ENCODE measurements at regions of chr10 and their contacts with region 1.

Region 1: DNA sequence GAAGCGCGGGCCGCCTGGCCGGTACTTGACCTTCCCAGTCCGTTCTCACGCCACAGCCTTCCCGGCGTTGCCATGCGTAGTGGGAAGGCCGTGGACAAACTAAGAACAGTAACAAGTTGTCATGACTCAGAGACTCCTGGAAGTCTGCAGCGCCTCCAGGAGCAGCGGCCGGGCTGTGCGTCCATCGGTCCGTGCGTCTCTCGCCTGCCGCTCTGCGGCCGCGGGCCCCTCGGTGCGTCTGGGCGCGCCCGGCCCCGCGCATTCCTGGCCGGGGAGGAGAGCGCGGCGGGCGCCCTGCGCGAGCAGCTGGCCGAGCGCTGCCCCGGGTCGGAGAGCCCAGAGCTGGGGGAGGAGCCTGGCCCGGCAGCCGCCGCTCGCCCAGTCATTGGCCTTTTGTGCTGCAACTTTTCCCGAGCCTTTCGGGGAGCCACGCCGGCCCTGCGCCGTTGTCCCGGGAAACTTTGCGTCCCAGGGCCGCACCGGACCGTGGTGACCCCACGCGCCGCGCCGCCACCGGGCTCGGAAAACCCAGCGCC is 123.7 kb downstream of the TACC2 start:
- DNase-seq: peak; percentile 46 to 96
- H3K4me3 ChIP-seq: peak overlapping the region; percentile 74 to 81
- H3K27ac ChIP-seq: peak overlapping the region; percentile 97 to 99
- H3K4me1 ChIP-seq: peaks cover 0 to 19% of the 10 kb centered on the region in 2 donors
- H3K27me3 ChIP-seq: no peaks in the 10 kb centered on the region
- CTCF ChIP-seq: peak; percentile 41 to 71 (median 44)

Region 2: GRCh38 chr10:121974535-121975294 is 138.0 kb before region 1 on chr10 and contains the start of gene NSMCE4A:
- intact Hi-C with region 1: loop called (anchors 5 kb)
- DNase-seq: peak in 1 of 2 donors; percentile 81
- H3K4me3 ChIP-seq: peak within 1 kb of the TSS; percentile 80 to 95
- H3K27ac ChIP-seq: peak within 1 kb of the TSS; percentile 93 to 96
- H3K4me1 ChIP-seq: peaks cover 0 to 16% of the 10 kb centered on the region in 2 donors
- H3K27me3 ChIP-seq: no peaks in the 10 kb centered on the region
- CTCF ChIP-seq: peak in 2 of 3 experiments; percentile 50 to 52
- total RNA-seq, gene NSMCE4A: 63.3 TPM

Region 3: DNA sequence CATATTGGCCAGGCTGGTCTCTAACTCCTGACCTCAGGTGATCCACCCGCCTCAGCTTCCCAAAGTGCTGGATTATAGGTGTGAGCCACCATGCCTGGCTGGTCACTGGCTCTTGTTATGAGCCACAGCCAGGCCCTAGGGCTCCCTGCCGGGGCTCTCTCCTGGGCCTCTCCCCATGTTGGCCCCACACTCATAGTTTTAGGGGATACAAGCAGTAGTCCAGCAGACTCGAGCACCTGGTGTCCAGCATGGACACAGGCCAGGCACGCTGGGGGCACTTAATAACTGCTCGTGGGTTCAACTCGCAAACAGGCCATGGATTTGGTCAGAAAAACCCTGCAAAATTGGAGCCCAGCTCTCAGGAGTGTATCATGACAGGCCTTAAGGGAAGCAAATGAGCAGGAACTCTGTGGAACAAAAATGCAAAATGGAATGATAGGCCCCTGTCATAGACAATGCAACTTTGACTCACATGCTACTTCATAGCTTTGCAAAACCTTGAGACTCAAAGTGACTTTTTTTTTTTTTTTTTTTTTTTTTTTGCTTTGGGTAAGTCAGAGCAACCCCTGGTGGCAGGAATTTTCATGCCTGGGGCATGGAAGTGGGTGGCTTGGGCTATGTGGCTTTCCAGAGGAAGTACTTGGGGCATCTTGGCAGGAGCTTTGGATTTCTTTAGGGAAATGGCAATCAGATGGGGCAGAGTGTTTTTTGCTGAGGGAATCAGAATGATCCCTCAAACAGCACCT is 61.3 kb before region 1 on chr10:
- intact Hi-C with region 1: loop called (anchors 2 kb)
- DNase-seq: peak in 1 of 2 donors; percentile 84
- H3K4me3 ChIP-seq: no peak overlapping the region
- H3K27ac ChIP-seq: peak overlapping the region; percentile 24 to 70
- H3K4me1 ChIP-seq: peaks cover 3 to 4% of the 10 kb centered on the region in 2 donors
- H3K27me3 ChIP-seq: no peaks in the 10 kb centered on the region
- CTCF ChIP-seq: peak; percentile 15 to 67 (median 67)

Region 4: DNA sequence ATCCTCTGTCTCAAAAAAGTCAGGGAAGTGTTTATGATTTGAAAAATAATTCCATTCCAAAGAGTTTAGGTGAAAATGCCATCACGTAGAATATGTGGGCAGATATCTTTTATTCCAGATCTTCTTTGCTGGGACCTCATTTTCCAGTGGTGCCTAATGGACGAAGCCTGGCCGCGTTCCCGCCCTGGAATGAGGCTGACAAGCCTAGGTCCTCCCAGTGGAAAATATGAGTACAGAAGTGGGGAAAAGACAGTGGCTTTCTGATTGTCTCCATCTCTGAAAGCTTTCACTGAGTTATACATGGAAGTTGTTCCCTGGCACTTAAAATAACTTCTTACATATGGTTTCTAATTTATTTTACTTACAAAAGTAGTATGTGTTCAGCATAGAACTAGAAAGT is 15.7 kb after region 1 on chr10:
- intact Hi-C with region 1: loop called (anchors 1 kb)
- DNase-seq: peak in 1 of 2 donors; percentile 80
- H3K4me3 ChIP-seq: peak overlapping the region; percentile 44 to 53
- H3K27ac ChIP-seq: peak overlapping the region; percentile 82 to 88
- H3K4me1 ChIP-seq: peaks cover 0 to 34% of the 10 kb centered on the region in 2 donors
- H3K27me3 ChIP-seq: no peaks in the 10 kb centered on the region
- CTCF ChIP-seq: no peak

Region 5: DNA sequence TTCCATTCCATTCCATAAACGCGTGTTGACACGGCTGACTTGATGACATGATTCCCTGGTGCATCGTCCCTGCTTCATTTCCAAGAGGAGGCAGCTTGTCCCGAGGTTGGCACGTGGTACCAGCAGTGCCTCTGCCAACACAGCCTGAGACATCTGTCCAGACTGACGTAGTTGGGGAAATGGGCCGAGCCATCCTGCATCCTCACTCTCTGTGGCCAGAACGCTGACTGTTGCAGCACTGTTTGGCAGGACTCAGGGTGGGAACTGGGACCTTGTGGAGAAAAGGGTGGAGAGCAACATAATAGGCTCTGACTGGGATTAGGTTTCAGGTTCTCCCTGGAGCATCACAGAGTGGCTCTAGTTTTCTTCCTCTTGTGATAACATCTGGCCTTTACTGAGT is 39.9 kb after region 1 on chr10:
- intact Hi-C with region 1: loop called (anchors 2 kb)
- DNase-seq: peak; percentile 65 to 95
- H3K4me3 ChIP-seq: no peak overlapping the region
- H3K27ac ChIP-seq: peak overlapping the region; percentile 60 to 74
- H3K4me1 ChIP-seq: peaks cover 12 to 33% of the 10 kb centered on the region in 2 donors
- H3K27me3 ChIP-seq: no peaks in the 10 kb centered on the region
- CTCF ChIP-seq: no peak

Region 6: DNA sequence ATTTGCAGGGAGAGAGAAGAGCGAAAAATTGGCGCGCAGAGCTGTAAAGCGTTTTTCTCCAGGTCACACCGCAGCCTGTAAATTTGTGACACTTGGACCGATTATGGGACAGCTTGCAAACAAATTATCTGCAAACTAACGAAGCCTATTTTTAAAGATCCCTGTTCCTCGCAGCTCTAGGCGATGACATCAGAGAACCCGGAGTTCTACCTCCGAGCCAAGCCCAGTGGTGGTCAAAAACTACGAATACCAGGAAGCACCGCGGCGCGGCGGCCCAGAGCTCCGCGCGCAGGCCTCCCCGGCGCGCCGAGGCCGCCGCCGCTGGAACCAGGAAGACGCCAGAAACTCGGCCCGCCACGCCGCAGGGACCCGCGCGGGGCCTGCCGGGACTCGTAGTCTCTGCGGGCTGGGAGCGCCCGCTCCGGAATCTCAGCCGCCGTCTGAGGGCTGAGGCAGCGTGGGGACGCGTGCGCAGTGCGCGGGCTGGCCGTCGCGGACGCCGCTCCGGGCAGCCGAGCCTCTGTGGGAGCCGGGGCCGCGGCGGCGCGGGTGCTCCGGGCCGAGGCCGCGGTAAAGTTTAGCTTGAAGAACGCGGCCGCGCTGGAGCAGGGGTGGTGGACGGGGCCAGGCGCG is 261.7 kb after region 1 on chr10 and contains the start of gene PLEKHA1:
- intact Hi-C with region 1: loop called (anchors 2 kb)
- DNase-seq: peak; percentile 83 to 98
- H3K4me3 ChIP-seq: peak within 1 kb of the TSS; percentile 78 to 95
- H3K27ac ChIP-seq: peak within 1 kb of the TSS; percentile 88 to 99
- H3K4me1 ChIP-seq: peaks cover 0 to 20% of the 10 kb centered on the region in 2 donors
- H3K27me3 ChIP-seq: no peaks in the 10 kb centered on the region
- CTCF ChIP-seq: no peak
- total RNA-seq, gene PLEKHA1: 128 TPM